Activated naive CD4-positive, alpha-beta T cell treated with anti-CD3 and anti-CD28 coated beads for 36 hours (primary cell): ENCODE measurements at regions of chr3 and their contacts with region 1.

Region 1: DNA sequence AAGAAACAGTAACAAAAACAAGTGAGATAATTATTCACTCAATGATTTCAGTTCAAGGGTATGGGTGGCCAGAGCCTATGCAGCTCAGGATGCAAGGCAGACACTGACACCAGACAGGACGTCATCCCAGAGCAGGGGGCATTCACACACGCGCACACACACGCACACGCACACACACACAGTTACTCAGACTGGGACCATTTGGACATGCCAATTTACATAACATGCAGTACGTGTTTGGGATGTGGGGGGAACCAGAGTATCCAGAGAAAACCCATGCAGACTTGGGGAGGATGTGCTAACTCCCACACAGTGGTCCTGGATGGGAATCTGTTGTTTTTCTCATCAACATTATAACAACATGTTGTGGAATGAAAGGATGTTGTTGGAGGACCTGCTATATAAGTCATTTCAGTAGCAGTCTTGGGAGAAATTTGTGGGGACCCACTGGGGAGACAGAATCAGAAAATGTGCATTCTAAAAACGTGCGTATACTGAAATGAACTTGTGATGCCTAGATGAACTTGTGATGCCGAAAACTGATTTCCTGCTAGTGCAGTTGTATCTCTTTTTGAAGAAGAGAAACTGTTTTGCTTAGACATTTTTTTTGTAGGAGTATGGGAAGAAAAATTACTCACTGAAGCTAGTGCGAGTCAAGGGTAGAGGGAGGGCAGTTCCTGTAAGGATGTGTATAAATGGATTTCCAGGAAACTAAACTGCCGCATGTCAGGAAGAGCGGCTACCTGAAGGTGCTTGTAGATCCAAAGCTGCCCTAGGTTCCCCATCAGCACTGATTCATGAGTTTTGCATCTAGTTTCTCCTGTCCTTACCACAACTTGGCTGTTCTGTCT is 25.2 kb downstream of the CD200 start:
- DNase-seq: peak; percentile 68
- H3K4me3 Mint-ChIP-seq: peak overlapping the region; percentile 58
- H3K27ac Mint-ChIP-seq: peak overlapping the region; percentile 87
- H3K4me1 Mint-ChIP-seq: peaks cover 43% of the 10 kb centered on the region
- H3K27me3 Mint-ChIP-seq: no peaks in the 10 kb centered on the region

Region 2: GRCh38 chr3:112405845-112406244 is 47.7 kb after region 1 on chr3:
- CTCF ChIA-PET with region 1: no interaction called
- intact Hi-C with region 1: loop called (anchors 2 kb)
- DNase-seq: peak; percentile 75
- H3K4me3 Mint-ChIP-seq: no peak overlapping the region
- H3K27ac Mint-ChIP-seq: no peak overlapping the region
- H3K4me1 Mint-ChIP-seq: peaks cover 23% of the 10 kb centered on the region
- H3K27me3 Mint-ChIP-seq: no peaks in the 10 kb centered on the region

Region 3: DNA sequence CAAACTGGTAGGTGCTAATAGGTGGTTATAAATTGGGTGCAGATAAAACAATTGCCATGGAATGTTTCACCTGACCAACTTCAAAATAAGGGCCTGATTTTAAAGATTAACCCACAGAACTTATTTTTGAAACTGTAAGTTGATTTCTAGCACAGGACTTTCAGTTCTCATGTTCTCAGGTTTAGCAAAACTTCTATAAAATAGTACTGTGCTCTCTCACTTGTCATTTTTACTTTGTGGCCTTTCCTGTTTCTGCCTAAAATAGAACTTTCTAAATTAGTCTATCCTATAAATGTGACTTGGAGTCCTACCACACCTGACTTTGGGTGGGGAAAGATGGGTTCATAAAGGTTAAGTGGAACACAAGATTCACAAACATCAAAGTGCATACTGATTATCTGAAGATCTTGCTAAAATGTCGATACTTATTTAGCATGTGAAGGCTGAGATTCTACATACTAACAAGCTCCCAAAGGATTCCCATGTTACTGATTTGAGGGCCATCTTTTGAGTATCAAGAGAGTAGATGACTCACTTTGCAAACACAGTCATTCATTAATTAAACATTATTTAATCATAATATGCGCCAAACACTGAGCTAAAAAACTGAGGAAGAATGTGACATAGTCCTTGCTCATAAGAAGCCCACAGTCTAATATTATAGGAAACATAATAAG is 102.5 kb after region 1 on chr3:
- CTCF ChIA-PET with region 1: no interaction called
- intact Hi-C with region 1: loop called (anchors 1 kb)
- DNase-seq: no peak
- H3K4me3 Mint-ChIP-seq: no peak overlapping the region
- H3K27ac Mint-ChIP-seq: peak overlapping the region; percentile 79
- H3K4me1 Mint-ChIP-seq: peaks cover 60% of the 10 kb centered on the region
- H3K27me3 Mint-ChIP-seq: no peaks in the 10 kb centered on the region

Region 4: GRCh38 chr3:112489674-112490479 is 131.7 kb after region 1 on chr3:
- CTCF ChIA-PET with region 1: interaction called, 5 read pairs
- intact Hi-C with region 1: loop called (anchors 1 kb)
- DNase-seq: peak; percentile 56
- H3K4me3 Mint-ChIP-seq: peak overlapping the region; percentile 100
- H3K27ac Mint-ChIP-seq: peak overlapping the region; percentile 100
- H3K4me1 Mint-ChIP-seq: peaks cover 81% of the 10 kb centered on the region
- H3K27me3 Mint-ChIP-seq: no peaks in the 10 kb centered on the region